ENCODE measurements at regions of chr1 and their contacts with region 1.

Region 1: GRCh38 chr1:112501810-112502641 is 6.7 kb upstream of the WNT2B start:
- DNase-seq: no peak
- ATAC-seq: peak; percentile 78
- H3K4me3 ChIP-seq: peak overlapping the region; percentile 28 to 50
- H3K27ac ChIP-seq: no peak overlapping the region
- H3K4me1 ChIP-seq: peaks cover 0 to 8% of the 10 kb centered on the region in 2 experiments; a peak in 1 of 4 replicates
- H3K27me3 ChIP-seq: no peaks in the 10 kb centered on the region
- CTCF ChIP-seq: peak; percentile 27 to 35 (median 33); a peak in 4 of 6 replicates
- POLR2A ChIP-seq: no peak
- RAD21 ChIP-seq: peak; percentile 59

Region 2: DNA sequence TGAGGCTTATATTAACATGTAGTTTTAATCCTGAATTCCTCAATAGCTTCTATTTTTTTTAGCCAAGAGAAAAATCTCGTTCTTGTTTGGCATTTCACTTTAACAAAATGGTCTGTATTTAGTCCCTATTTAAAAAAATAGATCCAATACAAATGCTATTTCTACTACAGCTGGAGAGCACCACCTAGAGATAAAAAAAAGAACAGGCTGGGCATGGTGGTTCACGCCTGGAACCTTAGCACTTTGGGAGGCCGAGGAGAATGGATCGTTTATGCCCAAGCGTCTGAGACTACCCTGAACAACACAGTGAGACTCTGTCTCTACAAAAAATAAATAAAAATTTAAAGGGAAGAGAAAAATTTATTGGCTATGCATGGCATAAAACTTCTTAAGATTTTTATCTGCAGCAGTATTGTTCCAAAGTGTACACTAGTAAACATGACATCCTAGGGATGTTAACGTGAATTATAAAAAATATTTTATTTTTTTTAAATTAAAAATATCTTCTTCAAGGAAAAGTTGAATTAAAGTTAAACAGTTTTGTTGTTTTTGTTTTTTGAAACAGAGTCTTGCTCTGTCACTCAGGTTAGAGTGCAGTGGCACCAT is 112.5 kb after region 1 on chr1:
- CTCF ChIA-PET with region 1: interaction called, 11 read pairs
- POLR2A ChIA-PET with region 1: no interaction called
- RAD21 ChIA-PET with region 1: no interaction called
- intact Hi-C with region 1: loop called (anchors 10 kb)
- DNase-seq: no peak
- ATAC-seq: 0 out of 2 replicates have a peak, but pooled peaks have one; percentile 43
- H3K4me3 ChIP-seq: no peak overlapping the region
- H3K27ac ChIP-seq: no peak overlapping the region
- H3K4me1 ChIP-seq: peaks cover 9 to 14% of the 10 kb centered on the region in 2 experiments; a peak in 3 of 4 replicates
- H3K27me3 ChIP-seq: no peaks in the 10 kb centered on the region
- CTCF ChIP-seq: peak; percentile 65 to 74 (median 68); a peak in 5 of 6 replicates
- POLR2A ChIP-seq: no peak
- RAD21 ChIP-seq: peak; percentile 80

Measured in HCT116 (cell line).